ENCODE measurements at regions of chr17 and their contacts with region 1.

Region 1: DNA sequence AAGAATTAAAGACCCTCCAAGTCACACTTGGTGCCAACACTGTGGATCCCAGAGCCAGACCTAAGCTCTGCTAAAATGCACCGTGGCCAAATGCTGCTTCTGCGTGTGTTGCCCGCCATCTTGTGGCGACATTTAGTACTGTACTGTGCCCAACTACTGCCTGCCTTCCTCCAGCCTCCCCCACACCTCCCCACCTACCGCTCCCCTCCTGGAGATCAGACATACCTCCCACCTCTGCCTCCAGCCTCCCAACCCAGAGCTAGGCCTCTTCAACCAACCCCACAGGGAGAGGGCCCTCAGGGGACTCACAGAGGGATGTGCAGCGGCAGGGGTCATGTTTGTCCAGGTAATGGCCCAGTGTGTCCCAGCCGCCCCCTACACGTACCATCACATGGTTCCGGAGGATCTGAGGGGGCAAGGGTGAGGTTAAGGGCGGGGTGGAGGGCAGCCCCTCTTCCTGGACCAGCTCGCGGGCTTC is 5.5 kb downstream of the GAS2L2 start:
- DNase-seq: no peak
- H3K4me3 ChIP-seq: no peak overlapping the region
- H3K27me3 ChIP-seq: peaks cover 13% of the 10 kb centered on the region
- CTCF ChIP-seq: peak; percentile 82

Region 2: DNA sequence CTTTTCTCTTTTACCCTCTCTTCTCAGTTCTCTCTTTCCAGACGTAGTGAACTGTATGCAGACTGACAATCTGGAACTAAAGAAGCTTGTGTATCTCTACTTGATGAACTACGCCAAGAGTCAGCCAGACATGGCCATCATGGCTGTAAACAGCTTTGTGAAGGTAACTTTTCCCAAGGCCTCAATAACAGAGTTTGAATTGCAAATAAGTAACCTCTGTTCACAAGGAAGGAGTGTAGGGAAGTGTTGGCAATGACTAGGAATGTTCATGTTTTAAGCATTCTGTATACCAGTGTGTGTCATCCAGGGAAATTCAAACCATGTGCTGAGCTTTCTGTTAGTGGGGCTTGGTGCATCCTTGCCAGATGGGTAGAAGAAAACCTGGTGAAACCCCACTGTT is 141.9 kb before region 1 on chr17:
- CTCF ChIA-PET with region 1: interaction called, 268 read pairs
- POLR2A ChIA-PET with region 1: no interaction called
- DNase-seq: peak; percentile 31
- H3K4me3 ChIP-seq: no peak overlapping the region
- H3K27me3 ChIP-seq: no peaks in the 10 kb centered on the region
- CTCF ChIP-seq: no peak

Region 3: GRCh38 chr17:35630530-35631148 is 116.9 kb before region 1 on chr17:
- CTCF ChIA-PET with region 1: interaction called, 16 read pairs
- POLR2A ChIA-PET with region 1: no interaction called
- DNase-seq: peak; percentile 11
- H3K4me3 ChIP-seq: no peak overlapping the region
- H3K27me3 ChIP-seq: no peaks in the 10 kb centered on the region
- CTCF ChIP-seq: no peak

Region 4: GRCh38 chr17:35716897-35717465 is 30.6 kb before region 1 on chr17:
- CTCF ChIA-PET with region 1: interaction called, 11 read pairs
- POLR2A ChIA-PET with region 1: no interaction called
- DNase-seq: peak; percentile 4
- H3K4me3 ChIP-seq: no peak overlapping the region
- H3K27me3 ChIP-seq: no peaks in the 10 kb centered on the region
- CTCF ChIP-seq: no peak

Region 5: DNA sequence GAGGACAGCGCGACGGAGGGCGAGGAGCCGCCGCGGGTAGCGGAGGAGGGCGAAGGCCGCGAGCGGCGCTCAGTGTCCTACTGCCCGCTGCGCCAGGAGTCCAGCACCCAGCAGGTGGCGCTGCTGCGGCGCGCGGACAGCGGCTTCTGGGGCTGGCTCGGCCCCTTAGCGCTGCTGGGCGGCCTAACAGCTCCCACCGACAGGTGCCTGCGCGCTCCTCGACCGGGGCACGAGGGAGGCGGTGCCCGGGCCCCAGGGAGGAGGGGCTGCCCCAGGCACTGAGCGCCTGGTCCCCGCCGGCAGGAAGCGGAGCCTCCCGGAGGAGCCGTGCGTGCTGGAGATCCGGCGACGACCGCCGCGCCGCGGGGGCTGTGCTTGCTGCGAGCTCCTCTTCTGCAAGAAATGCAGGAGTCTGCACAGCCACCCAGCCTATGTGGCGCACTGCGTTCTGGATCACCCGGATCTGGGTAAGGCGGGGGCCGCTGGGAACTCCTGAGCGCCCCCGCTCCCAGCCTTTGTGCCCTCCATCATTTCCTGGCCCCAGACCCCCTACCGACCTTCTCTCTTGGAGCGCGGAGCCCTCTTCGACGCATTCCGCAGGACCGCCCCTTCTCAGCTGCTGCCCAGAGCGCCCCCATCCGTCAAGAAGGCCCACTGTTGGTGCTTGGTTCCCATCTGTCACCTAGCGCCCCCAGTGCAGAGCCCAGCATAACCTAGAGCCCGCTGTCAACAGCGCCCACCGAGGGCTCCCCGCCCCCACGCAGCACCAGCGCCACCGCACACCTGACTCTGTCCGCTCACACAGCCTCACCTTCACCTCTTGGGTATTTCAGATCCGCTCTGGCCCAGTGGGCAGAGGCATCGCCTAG is 16.8 kb after region 1 on chr17:
- CTCF ChIA-PET with region 1: interaction called, 20 read pairs
- POLR2A ChIA-PET with region 1: no interaction called
- DNase-seq: no peak
- H3K4me3 ChIP-seq: peak overlapping the region; percentile 34
- H3K27me3 ChIP-seq: peaks cover 11% of the 10 kb centered on the region
- CTCF ChIP-seq: peak; percentile 84

Region 6: GRCh38 chr17:35915153-35915969 is 167.8 kb after region 1 on chr17:
- CTCF ChIA-PET with region 1: no interaction called
- POLR2A ChIA-PET with region 1: no interaction called
- DNase-seq: no peak
- H3K4me3 ChIP-seq: no peak overlapping the region
- H3K27me3 ChIP-seq: no peaks in the 10 kb centered on the region; the same call in none of the 2 replicates
- CTCF ChIP-seq: no peak